ENCODE measurements at regions of chr15 and their contacts with region 1.

Region 1: DNA sequence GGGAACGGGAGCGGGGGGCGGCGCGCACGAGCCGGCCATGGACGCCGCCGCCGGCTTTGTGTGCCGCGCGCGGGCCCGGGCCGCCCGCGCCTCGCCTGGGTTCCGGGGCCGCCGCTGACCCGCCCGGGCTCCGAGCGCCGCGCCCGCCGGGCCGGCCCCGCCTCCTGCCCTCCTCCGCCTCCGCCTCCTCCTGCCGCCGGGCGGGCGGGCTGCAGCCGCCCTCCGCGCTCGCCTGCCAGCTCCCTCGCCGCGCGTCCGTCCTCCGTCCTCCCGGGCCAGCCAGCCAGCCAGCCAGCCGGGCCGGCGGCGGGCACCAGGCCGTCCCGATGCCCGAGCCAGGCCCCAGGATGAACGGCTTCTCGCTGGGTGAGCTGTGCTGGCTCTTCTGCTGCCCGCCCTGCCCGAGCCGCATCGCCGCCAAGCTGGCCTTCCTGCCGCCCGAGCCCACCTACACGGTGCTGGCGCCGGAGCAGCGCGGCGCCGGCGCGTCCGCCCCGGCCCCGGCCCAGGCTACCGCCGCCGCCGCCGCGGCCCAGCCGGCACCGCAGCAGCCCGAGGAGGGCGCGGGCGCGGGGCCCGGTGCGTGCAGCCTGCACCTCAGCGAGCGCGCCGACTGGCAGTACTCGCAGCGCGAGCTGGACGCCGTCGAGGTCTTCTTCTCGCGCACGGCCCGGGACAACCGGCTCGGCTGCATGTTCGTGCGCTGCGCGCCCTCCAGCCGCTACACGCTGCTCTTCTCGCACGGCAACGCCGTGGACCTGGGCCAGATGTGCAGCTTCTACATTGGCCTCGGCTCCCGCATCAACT is at the start of gene ABHD17C:
- DNase-seq: peak in 1 of 2 experiments; percentile 72
- H3K4me3 ChIP-seq: peak within 1 kb of the TSS; percentile 99
- H3K27ac ChIP-seq: peak within 1 kb of the TSS; percentile 74
- H3K4me1 ChIP-seq: peaks cover 61% of the 10 kb centered on the region
- H3K27me3 ChIP-seq: no peaks in the 10 kb centered on the region
- CTCF ChIP-seq: no peak
- total RNA-seq, gene ABHD17C: 35.6 and 42.2 TPM in 2 replicates

Region 2: GRCh38 chr15:80567721-80568157 is 127.6 kb before region 1 on chr15:
- CTCF ChIA-PET with region 1: interaction called, 4 read pairs
- POLR2A ChIA-PET with region 1: no interaction called
- intact Hi-C with region 1: loop called (anchors 1 kb)
- DNase-seq: peak; percentile 54 to 66
- H3K4me3 ChIP-seq: no peak overlapping the region
- H3K27ac ChIP-seq: no peak overlapping the region
- H3K4me1 ChIP-seq: 0 out of 2 replicates have a peak, but pooled peaks cover 4% of the 10 kb centered on the region
- H3K27me3 ChIP-seq: no peaks in the 10 kb centered on the region
- CTCF ChIP-seq: peak; percentile 80

Region 3: DNA sequence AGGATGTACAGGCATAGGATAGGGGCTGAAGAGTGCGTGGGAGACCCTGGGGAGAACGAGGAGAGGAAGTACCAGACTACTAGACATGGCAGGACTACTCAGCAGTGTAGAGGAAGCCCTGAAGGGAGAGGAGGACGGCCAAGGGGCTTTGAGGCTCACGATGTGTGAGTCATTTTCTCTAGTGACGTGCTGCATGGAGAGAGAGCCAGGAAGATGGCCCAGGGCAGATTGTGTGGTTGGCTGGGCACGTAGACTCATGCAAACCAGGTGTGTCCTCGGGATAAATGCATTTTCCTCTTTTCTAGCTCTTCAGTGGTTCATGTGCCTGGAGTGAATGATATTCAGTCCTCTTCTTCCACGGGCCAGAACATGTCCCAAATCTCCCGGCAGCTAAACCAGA is 115.2 kb before region 1 on chr15:
- CTCF ChIA-PET with region 1: no interaction called
- POLR2A ChIA-PET with region 1: no interaction called
- intact Hi-C with region 1: loop called (anchors 2 kb)
- DNase-seq: peak; percentile 81 to 89
- H3K4me3 ChIP-seq: no peak overlapping the region
- H3K27ac ChIP-seq: peak overlapping the region; percentile 73
- H3K4me1 ChIP-seq: peaks cover 47% of the 10 kb centered on the region
- H3K27me3 ChIP-seq: no peaks in the 10 kb centered on the region
- CTCF ChIP-seq: no peak

Region 4: DNA sequence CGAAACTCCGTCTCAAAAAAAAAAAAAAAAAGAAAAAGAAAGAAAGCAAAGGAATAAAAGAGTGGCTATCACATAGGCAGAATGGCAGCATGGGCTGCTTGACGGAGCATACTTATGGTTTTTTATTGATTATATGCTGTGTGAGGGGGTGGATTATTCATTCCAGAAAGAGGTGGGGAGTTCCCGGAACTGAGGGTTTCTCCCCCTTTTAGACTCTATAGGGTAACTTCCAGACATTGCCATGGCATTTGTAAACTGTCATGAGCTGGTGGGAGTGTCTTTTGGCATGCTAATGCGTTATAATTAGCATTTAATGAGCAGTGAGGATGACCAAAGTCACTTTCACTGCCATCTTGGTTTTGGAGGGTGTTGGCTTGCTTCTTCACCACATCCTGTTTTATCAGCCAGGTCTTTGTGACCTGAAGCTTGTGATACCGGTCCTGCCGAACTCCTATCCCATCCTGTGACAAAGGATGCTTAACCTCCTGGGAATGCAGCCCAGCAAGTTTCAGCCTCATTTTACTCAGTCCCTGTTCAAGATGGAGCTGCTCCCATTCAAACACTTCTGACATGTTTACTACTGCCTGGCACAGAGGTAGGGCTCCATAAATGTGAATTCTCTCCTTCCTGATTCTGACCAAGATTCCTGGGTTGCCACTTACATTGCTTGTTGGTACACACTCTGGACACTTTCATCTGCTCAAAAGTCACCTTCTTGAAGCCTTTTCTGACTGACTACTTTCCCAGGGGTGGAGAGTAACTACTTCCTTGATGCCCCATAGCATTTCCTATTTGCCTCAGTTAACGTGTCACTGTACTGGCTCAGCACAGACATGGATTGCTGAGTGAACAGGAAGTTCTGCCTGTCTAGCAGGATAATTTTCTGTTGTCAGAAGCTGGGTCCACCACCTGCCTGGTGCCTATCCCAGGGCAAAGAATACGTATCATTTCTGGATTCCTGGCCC is 15.9 kb before region 1 on chr15:
- CTCF ChIA-PET with region 1: interaction called, 4 read pairs
- POLR2A ChIA-PET with region 1: interaction called, 6 read pairs
- intact Hi-C with region 1: loop called (anchors 2 kb)
- DNase-seq: peak; percentile 80 to 97
- H3K4me3 ChIP-seq: peak overlapping the region; percentile 27; the same call in 1 of the 2 replicates
- H3K27ac ChIP-seq: peak overlapping the region; percentile 90
- H3K4me1 ChIP-seq: peaks cover 67% of the 10 kb centered on the region
- H3K27me3 ChIP-seq: no peaks in the 10 kb centered on the region
- CTCF ChIP-seq: no peak

Region 5: DNA sequence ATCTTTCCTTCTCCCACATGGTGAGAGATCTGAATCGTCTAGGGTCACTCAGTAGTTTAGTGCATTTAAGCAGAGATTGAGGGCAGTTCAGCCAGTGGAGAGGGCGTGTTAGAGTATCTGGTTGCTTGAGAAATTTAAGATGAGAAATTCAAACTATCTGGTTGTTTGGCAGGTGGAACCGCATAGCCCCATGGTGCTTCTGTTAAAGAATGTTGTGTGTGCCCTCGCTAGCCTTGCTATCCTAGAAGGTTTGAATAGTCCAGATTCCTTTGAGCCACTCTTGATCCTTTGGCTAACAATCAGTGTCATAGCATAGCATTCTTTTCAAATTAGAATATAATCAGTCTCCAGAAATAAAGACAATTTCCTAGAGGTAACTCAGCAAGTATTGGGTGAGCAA is 31.9 kb after region 1 on chr15:
- CTCF ChIA-PET with region 1: no interaction called
- POLR2A ChIA-PET with region 1: no interaction called
- intact Hi-C with region 1: loop called (anchors 2 kb)
- DNase-seq: peak; percentile 68 to 89
- H3K4me3 ChIP-seq: no peak overlapping the region
- H3K27ac ChIP-seq: peak overlapping the region; percentile 67
- H3K4me1 ChIP-seq: peaks cover 18% of the 10 kb centered on the region
- H3K27me3 ChIP-seq: no peaks in the 10 kb centered on the region
- CTCF ChIP-seq: no peak

Region 6: DNA sequence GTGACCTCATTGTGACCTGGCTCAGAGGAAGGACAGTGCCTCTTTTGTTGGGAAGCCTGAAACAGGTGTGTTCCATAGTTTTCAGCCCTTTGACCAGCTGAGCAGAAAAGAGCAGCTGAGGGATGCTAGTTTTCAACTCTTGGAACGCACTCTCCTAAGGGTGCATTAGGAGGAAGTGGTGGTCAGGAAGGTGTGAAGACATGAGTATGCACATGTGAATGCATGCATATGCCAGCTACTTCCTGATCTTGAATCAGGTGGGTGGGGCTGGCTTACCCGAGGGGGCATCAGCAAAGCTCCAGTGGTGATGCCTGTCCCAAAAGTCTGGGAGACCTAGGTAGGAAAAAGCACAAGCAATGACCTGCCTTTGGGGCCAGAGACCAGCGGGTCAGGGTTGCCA is 60.6 kb after region 1 on chr15:
- CTCF ChIA-PET with region 1: no interaction called
- POLR2A ChIA-PET with region 1: no interaction called
- intact Hi-C with region 1: loop called (anchors 5 kb)
- DNase-seq: no peak
- H3K4me3 ChIP-seq: no peak overlapping the region
- H3K27ac ChIP-seq: no peak overlapping the region
- H3K4me1 ChIP-seq: no peaks in the 10 kb centered on the region
- H3K27me3 ChIP-seq: no peaks in the 10 kb centered on the region
- CTCF ChIP-seq: no peak

Region 7: GRCh38 chr15:80870893-80871292 is 175.6 kb after region 1 on chr15:
- CTCF ChIA-PET with region 1: no interaction called
- POLR2A ChIA-PET with region 1: no interaction called
- intact Hi-C with region 1: no loop called
- DNase-seq: no peak
- H3K4me3 ChIP-seq: no peak overlapping the region
- H3K27ac ChIP-seq: no peak overlapping the region
- H3K4me1 ChIP-seq: no peaks in the 10 kb centered on the region
- H3K27me3 ChIP-seq: no peaks in the 10 kb centered on the region
- CTCF ChIP-seq: no peak

Measured in PC-9 (cell line).